ENCODE measurements at regions of chr15 and their contacts with region 1.

Region 1: DNA sequence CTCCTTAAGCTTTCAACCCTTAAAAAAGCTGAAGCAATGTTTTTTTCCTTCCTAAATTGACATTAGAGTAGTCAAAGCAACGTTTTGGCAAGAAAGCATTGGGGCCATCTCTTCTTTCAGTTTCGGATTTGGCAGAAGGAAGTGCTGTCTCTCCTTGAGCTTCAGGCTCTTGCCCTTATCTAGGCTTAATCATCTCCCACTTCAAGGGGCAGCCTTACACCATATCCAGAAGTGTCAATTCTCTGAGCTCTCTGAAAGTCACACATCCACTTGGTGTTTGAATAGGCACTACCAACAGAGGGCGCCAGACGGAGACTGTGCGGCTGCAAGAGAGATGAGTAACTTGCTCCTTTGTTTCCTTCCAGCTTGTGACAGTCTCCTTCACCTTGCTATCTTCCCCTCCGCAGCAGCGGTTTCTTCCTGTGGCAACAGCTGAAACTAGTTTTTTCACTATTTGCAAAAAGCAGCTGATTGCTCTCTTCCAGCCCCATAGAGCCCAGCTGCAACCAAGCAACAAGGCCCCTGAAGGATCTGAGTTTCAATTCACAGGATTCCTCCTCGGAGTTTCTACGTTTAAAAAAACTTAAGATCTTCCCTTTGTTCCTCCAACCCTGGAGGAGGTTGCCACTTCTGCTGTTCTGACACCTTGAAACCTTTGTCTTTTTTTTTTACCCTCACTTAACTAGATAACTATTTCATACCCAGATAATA is 147.0 kb upstream of the SLCO3A1 start:
- DNase-seq: peak; percentile 91
- H3K4me3 Mint-ChIP-seq: no peak overlapping the region
- H3K27ac Mint-ChIP-seq: no peak overlapping the region
- H3K4me1 Mint-ChIP-seq: peaks cover 14% of the 10 kb centered on the region
- H3K27me3 Mint-ChIP-seq: no peaks in the 10 kb centered on the region

Region 2: GRCh38 chr15:91302588-91303439 is 403.7 kb before region 1 on chr15:
- CTCF ChIA-PET with region 1: interaction called, 28 read pairs
- POLR2A ChIA-PET with region 1: no interaction called
- intact Hi-C with region 1: loop called (anchors 2 kb)
- DNase-seq: peak; percentile 28
- H3K4me3 Mint-ChIP-seq: no peak overlapping the region
- H3K27ac Mint-ChIP-seq: no peak overlapping the region
- H3K4me1 Mint-ChIP-seq: peaks cover 21% of the 10 kb centered on the region
- H3K27me3 Mint-ChIP-seq: peaks cover 10% of the 10 kb centered on the region

Region 3: DNA sequence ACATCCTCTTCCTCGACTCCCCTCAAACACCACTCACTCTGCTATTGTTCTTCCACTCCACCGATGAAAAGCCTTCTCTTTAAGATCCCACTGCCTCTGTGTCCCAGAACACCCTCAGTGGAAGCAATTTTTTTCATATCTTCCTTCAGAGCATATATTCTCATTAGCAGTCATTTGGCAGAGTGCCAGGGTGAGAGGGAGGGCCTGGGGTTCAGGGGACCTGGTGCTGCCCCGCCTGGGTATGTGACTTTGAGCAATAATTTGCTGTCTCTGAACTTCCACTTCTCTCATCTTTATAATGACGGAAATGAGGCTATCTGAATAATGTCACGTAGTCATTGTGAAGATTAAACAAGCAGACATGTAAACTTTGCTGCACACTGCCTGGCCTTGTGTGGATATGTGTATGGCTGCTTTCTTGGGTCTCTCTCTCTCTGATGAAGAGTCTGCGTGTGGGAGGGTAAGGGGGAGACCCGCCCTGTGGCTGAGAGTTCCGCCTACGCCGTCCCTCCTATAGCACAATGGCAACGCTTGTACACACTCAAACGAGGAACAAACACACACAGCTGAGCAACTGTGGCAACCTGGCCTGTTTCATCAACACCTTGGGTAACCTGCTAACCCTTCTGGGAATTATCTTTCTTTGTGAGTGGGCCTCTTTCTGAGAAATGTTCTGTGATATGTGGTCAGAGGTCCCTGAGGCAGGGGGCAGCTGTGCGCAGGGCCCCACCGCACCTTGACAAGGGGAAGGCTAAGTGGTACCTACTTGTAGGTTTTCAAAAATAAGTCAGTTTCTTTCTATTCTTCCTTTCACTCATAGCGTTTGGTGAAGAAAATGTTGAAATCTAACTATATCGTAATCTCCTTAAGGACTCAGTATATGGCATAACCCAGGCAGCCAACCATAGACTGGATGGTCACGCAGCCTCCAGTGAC is 236.6 kb before region 1 on chr15:
- CTCF ChIA-PET with region 1: interaction called, 5 read pairs
- POLR2A ChIA-PET with region 1: no interaction called
- intact Hi-C with region 1: loop called (anchors 1 kb)
- DNase-seq: peak; percentile 87
- H3K4me3 Mint-ChIP-seq: peak overlapping the region; percentile 27
- H3K27ac Mint-ChIP-seq: peak overlapping the region; percentile 83
- H3K4me1 Mint-ChIP-seq: peaks cover 58% of the 10 kb centered on the region
- H3K27me3 Mint-ChIP-seq: no peaks in the 10 kb centered on the region

Region 4: GRCh38 chr15:91694831-91695210 is 11.7 kb before region 1 on chr15:
- CTCF ChIA-PET with region 1: interaction called, 20 read pairs
- POLR2A ChIA-PET with region 1: no interaction called
- intact Hi-C with region 1: no loop called
- DNase-seq: no peak
- H3K4me3 Mint-ChIP-seq: no peak overlapping the region
- H3K27ac Mint-ChIP-seq: no peak overlapping the region
- H3K4me1 Mint-ChIP-seq: no peaks in the 10 kb centered on the region
- H3K27me3 Mint-ChIP-seq: peaks cover 1% of the 10 kb centered on the region

Region 5: DNA sequence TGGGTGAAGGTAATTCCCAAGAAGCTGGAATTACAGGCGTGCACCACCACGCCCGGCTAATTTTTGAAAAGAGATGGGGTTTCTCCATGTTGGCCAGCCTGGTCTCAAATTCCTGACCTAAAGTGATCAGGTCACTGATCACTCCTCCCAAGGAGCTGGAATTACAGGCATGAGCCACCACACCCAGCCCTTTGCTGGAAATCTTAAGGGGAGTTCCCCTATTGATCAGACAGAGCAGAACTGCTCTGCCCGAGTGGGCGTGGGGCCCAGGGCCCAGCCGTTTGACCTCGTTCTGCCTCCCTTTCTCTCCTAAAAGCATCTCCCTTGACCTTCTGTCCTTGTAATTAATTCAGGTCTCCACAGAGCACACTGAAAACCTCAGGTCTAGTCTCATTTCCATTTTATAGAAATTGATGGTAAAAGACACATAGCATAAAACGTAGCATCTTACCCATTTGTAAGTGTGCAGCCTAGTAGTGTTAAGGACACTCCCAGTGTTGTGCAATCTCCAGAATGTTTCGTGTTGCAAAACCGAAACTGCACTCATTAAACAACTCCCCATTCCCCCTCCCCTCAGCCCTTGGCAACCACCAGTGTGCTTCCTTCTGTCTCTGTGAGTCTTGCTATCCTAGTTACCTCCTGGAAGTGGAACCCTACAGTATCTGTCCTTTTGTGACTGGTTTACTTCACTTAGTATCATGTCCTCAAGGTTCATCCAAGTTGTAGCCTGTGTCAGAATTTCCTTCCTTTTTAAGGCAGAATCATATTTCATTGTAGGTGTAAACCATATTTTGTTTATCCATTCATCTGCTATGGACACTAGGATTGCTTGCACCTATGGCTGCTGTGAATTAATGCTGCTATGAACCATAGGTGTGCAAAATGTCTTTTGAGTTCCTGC is 236.4 kb after region 1 on chr15:
- CTCF ChIA-PET with region 1: interaction called, 18 read pairs
- POLR2A ChIA-PET with region 1: no interaction called
- intact Hi-C with region 1: loop called (anchors 10 kb)
- DNase-seq: peak; percentile 68
- H3K4me3 Mint-ChIP-seq: peak overlapping the region; percentile 30
- H3K27ac Mint-ChIP-seq: peak overlapping the region; percentile 21
- H3K4me1 Mint-ChIP-seq: peaks cover 57% of the 10 kb centered on the region
- H3K27me3 Mint-ChIP-seq: no peaks in the 10 kb centered on the region

Region 6: GRCh38 chr15:92077353-92078085 is 371.0 kb after region 1 on chr15:
- CTCF ChIA-PET with region 1: interaction called, 101 read pairs
- POLR2A ChIA-PET with region 1: no interaction called
- intact Hi-C with region 1: loop called (anchors 1 kb)
- DNase-seq: peak; percentile 84
- H3K4me3 Mint-ChIP-seq: no peak overlapping the region
- H3K27ac Mint-ChIP-seq: no peak overlapping the region
- H3K4me1 Mint-ChIP-seq: peaks cover 34% of the 10 kb centered on the region
- H3K27me3 Mint-ChIP-seq: no peaks in the 10 kb centered on the region

Region 7: DNA sequence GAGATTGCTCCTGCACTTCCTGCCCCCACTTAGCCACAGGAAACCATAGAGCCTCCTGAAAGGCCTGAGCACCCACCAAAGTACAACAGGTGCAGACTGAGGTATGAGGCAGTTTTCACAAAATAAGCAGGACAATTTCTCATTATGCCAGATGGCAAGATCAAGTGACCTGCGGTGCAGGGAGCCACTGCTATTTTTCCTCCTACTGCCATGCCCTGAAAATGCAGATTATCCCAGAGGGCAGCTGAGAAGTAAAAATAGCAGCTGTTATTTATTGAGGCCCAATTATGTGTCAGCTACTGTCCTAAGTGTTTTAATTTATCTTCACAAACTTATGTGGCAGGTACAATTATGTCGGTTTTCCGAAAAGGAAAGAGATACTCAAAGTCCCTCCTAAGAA is 477.7 kb after region 1 on chr15:
- CTCF ChIA-PET with region 1: no interaction called
- POLR2A ChIA-PET with region 1: no interaction called
- intact Hi-C with region 1: no loop called
- DNase-seq: no peak
- H3K4me3 Mint-ChIP-seq: no peak overlapping the region
- H3K27ac Mint-ChIP-seq: no peak overlapping the region
- H3K4me1 Mint-ChIP-seq: no peaks in the 10 kb centered on the region
- H3K27me3 Mint-ChIP-seq: peaks cover 8% of the 10 kb centered on the region